Activated CD4-positive, alpha-beta T cell treated with anti-CD3 and anti-CD28 coated beads for 36 hours (primary cell): ENCODE measurements at regions of chr2 and their contacts with region 1.

Region 1: GRCh38 chr2:234425619-234426603 is 71.0 kb downstream of the ARL4C start:
- DNase-seq: peak; percentile 73
- ATAC-seq: peak; percentile 62
- H3K4me3 Mint-ChIP-seq: peak overlapping the region; percentile 60
- H3K27ac Mint-ChIP-seq: peak overlapping the region; percentile 97
- H3K4me1 Mint-ChIP-seq: peaks cover 90% of the 10 kb centered on the region
- H3K27me3 Mint-ChIP-seq: no peaks in the 10 kb centered on the region

Region 2: GRCh38 chr2:234308813-234309195 is 117.1 kb before region 1 on chr2:
- CTCF ChIA-PET with region 1: no interaction called
- POLR2A ChIA-PET with region 1: no interaction called
- intact Hi-C with region 1: loop called (anchors 1 to 2 kb)
- DNase-seq: peak; percentile 86
- ATAC-seq: peak; percentile 86
- H3K4me3 Mint-ChIP-seq: peak overlapping the region; percentile 42
- H3K27ac Mint-ChIP-seq: peak overlapping the region; percentile 99
- H3K4me1 Mint-ChIP-seq: peaks cover 66% of the 10 kb centered on the region
- H3K27me3 Mint-ChIP-seq: no peaks in the 10 kb centered on the region

Region 3: DNA sequence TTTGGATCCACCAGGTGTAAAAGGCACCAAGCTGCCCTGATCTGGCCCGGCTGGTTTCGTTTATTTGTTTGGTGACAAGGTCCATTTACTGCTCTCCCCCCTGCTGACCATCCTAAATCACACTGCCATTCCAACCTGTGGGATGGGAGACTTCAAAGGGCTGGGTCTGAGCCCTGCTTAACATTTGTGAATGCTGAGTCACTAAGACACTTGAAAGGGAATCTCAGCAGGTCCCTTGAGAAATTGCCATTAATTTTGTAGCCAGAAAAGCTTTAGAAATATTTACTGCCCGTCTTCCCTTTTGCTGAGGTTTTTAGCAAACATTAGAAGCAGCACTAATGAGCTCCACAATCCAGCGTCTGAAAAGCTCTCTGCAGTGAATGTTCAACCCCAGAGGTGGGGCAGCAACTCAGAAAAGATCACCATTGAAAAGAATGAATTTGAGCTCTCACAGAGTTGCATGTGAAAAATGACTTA is 62.9 kb before region 1 on chr2:
- CTCF ChIA-PET with region 1: no interaction called
- POLR2A ChIA-PET with region 1: no interaction called
- intact Hi-C with region 1: no loop called
- DNase-seq: no peak
- ATAC-seq: no peak
- H3K4me3 Mint-ChIP-seq: no peak overlapping the region
- H3K27ac Mint-ChIP-seq: no peak overlapping the region
- H3K4me1 Mint-ChIP-seq: peaks cover 33% of the 10 kb centered on the region
- H3K27me3 Mint-ChIP-seq: no peaks in the 10 kb centered on the region

Region 4: GRCh38 chr2:234374736-234375135 is 51.2 kb before region 1 on chr2:
- CTCF ChIA-PET with region 1: interaction called, 3 read pairs
- POLR2A ChIA-PET with region 1: no interaction called
- intact Hi-C with region 1: loop called (anchors 1 to 5 kb)
- DNase-seq: no peak
- ATAC-seq: no peak
- H3K4me3 Mint-ChIP-seq: no peak overlapping the region
- H3K27ac Mint-ChIP-seq: no peak overlapping the region
- H3K4me1 Mint-ChIP-seq: peaks cover 68% of the 10 kb centered on the region
- H3K27me3 Mint-ChIP-seq: no peaks in the 10 kb centered on the region

Region 5: GRCh38 chr2:234388554-234388953 is 37.4 kb before region 1 on chr2:
- CTCF ChIA-PET with region 1: no interaction called
- POLR2A ChIA-PET with region 1: no interaction called
- intact Hi-C with region 1: no loop called
- DNase-seq: no peak
- ATAC-seq: no peak
- H3K4me3 Mint-ChIP-seq: no peak overlapping the region
- H3K27ac Mint-ChIP-seq: no peak overlapping the region
- H3K4me1 Mint-ChIP-seq: peaks cover 29% of the 10 kb centered on the region
- H3K27me3 Mint-ChIP-seq: no peaks in the 10 kb centered on the region

Region 6: DNA sequence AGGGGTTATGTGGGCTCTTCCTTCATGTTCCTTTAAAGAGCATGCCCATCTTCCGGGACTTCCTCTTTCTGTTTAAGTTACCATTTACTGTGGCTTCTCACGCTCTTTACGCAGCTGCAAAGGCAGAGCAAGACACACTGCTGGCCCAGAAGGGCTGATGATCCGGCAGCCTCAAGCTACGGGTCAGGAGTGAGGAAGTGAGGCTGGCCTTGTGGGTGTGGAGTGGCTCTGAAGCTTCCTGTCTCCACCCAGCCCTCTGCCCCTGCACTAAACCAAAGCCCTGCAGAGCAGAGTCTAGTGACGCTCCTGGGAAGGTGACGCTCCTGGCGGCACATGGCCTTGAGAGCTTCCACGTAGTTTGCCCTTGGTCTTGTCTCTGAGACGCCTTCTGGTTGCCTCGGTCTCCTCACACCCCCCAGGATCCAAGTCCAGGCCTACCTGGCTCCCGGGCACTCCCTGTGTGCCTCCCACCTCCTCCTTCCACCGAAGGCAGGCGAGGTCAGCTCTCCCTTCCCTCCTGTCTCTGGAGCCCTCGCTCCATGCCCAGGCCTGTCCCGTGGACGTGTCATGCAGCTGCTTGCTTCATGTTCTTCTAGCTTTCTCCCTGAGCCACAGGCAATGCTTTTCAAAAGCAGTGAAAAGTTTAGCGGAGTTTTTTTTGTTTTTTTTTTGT is 20.6 kb after region 1 on chr2:
- CTCF ChIA-PET with region 1: interaction called, 5 read pairs
- POLR2A ChIA-PET with region 1: interaction called, 5 read pairs
- intact Hi-C with region 1: loop called (anchors 1 to 2 kb)
- DNase-seq: peak; percentile 86
- ATAC-seq: peak; percentile 89
- H3K4me3 Mint-ChIP-seq: peak overlapping the region; percentile 61
- H3K27ac Mint-ChIP-seq: peak overlapping the region; percentile 94
- H3K4me1 Mint-ChIP-seq: peaks cover 93% of the 10 kb centered on the region
- H3K27me3 Mint-ChIP-seq: no peaks in the 10 kb centered on the region

Region 7: DNA sequence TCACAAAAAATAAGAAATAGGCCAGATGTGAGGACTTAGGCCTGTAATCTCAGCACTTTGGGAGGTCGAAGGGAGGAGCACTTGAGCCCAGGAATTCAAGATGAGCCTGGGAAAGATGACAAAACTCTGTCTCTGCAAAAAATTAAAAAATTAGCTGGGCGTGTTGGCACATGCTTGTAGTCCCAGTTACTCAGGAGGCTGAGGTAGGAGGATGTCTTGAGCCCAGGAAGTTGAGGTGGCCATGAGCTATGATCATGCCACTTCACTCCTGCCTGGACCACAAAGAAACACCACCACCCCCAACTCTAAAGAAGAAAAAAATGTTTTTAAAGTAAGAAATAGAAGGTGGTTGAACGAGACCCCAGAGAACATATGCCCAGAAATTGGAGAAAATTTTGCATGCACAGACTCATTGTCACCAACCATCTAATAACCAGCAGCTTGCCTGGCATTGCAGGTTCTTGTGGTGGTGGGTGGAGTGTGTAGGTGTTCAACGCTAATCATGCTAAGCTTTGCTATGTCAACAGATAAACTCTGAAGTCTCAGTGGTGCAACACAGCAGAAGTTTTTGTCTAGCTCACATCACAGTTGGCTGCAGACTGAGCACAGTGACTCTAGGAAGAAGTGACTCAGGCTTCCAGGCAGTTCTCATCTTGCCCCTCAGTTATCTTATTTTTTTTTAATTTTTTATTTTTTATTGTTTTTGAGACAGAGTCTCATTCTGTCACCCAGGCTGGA is 52.4 kb after region 1 on chr2:
- CTCF ChIA-PET with region 1: interaction called, 6 read pairs
- POLR2A ChIA-PET with region 1: no interaction called
- intact Hi-C with region 1: loop called in 1 of 2 experiments (anchors 5 kb)
- DNase-seq: peak; percentile 69
- ATAC-seq: peak; percentile 62
- H3K4me3 Mint-ChIP-seq: no peak overlapping the region
- H3K27ac Mint-ChIP-seq: peak overlapping the region; percentile 49
- H3K4me1 Mint-ChIP-seq: peaks cover 77% of the 10 kb centered on the region
- H3K27me3 Mint-ChIP-seq: no peaks in the 10 kb centered on the region

Region 8: DNA sequence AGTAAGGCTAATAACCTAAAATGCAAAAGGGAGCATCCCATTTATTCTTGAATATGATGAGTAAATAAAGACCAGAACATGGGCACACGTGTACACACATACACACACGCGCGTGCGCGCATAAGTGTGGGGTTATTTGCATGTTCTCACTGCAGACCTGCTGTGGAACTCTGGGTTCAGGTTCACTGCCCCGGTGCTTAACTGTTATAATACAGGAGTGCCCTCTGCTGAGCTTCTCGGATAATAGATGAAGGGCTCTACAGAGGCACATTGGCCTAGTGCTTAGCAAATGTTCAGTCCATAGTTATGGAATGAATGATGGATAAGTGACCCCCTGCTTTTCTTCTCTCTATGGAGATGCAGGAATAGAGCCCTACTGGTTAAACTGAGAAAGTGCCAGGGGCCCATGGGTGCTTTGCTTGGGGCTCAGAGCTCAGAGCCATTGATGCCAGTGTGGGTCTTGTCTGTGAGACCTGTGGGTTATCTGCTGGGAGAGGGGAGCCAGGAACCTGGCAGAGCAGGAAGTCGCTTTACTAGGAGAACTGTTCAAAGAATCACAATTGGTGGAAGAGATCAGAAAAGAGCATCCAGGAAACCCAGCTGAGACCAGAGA is 74.6 kb after region 1 on chr2:
- CTCF ChIA-PET with region 1: interaction called, 3 read pairs
- POLR2A ChIA-PET with region 1: no interaction called
- intact Hi-C with region 1: loop called in 1 of 2 experiments (anchors 1 kb)
- DNase-seq: peak; percentile 81
- ATAC-seq: peak; percentile 69
- H3K4me3 Mint-ChIP-seq: no peak overlapping the region
- H3K27ac Mint-ChIP-seq: peak overlapping the region; percentile 32
- H3K4me1 Mint-ChIP-seq: peaks cover 27% of the 10 kb centered on the region
- H3K27me3 Mint-ChIP-seq: no peaks in the 10 kb centered on the region